MCF 10A (cell line): ENCODE measurements at regions of chr7 and their contacts with region 1.

Region 1: GRCh38 chr7:135662373-135663114 is at the start of gene STMP1:
- DNase-seq: peak; percentile 92
- H3K4me3 Mint-ChIP-seq: peak within 1 kb of the TSS; percentile 97
- H3K27ac Mint-ChIP-seq: peak within 1 kb of the TSS; percentile 98
- H3K4me1 Mint-ChIP-seq: peaks cover 26% of the 10 kb centered on the region
- H3K27me3 Mint-ChIP-seq: no peaks in the 10 kb centered on the region
- CTCF ChIP-seq: no peak
- total RNA-seq, gene STMP1: 33.6 and 37.0 TPM in 2 replicates

Region 2: DNA sequence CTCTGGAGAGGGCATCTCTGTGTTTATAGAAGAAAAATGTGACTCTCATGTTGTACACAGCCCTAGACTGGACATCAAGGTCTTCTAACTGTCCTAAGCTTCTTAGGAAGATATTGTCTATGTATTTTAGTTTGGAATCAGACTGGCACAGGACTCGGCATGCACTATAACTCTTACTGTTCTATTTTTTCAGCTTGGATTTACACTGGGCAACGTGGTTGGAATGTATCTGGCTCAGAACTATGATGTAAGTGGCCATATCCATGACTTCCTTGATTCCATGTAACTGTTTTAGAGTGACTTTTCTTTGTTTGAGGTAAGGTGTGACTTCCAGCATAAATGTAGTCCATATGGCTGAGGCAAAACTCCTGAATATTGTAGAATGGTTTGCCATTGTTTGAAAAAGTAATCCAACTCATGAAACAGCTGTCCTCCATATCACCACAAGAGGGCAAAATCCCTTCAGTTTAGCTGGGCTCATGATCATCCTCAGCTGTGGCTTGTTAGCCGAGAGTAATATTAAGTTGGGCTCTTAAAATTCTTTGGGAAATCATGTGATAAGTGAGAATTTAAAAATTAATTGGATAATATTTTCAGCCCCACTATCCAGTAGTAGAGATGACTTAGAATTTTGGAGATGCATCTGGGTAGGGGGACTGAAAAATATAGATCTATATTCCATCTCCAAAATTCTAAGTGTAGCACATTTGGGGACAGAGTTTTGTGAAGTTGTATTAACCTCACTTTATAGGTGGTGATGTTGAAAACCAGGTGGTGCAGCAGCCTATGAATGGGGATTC is 10.2 kb after region 1 on chr7:
- CTCF ChIA-PET with region 1: interaction called, 68 read pairs
- POLR2A ChIA-PET with region 1: interaction called, 42 read pairs
- intact Hi-C with region 1: no loop called
- DNase-seq: peak; percentile 77
- H3K4me3 Mint-ChIP-seq: no peak overlapping the region
- H3K27ac Mint-ChIP-seq: peak overlapping the region; percentile 46
- H3K4me1 Mint-ChIP-seq: peaks cover 37% of the 10 kb centered on the region
- H3K27me3 Mint-ChIP-seq: no peaks in the 10 kb centered on the region
- CTCF ChIP-seq: peak; percentile 67

Region 3: DNA sequence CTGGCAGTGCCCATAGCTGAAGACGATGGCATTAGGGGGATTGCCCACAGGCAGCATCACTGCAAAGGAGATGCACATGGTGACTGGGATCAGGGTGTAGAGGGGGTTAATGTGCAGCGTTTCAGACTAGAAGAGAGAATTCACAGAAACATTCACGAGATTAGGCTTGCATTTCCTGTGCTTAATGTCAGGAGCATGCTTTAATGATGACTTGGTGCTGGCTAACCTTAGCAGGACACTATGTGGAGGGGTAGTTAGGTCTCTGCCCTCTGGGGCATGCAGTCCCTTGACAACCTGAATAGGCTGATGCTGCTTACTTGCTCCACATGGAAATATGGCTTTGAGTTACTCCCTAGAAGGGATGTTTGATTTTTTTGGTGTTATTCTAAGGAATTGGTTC is 21.6 kb after region 1 on chr7:
- CTCF ChIA-PET with region 1: interaction called, 3 read pairs
- POLR2A ChIA-PET with region 1: interaction called, 14 read pairs
- intact Hi-C with region 1: no loop called
- DNase-seq: no peak
- H3K4me3 Mint-ChIP-seq: no peak overlapping the region
- H3K27ac Mint-ChIP-seq: peak overlapping the region; percentile 1
- H3K4me1 Mint-ChIP-seq: peaks cover 17% of the 10 kb centered on the region
- H3K27me3 Mint-ChIP-seq: no peaks in the 10 kb centered on the region
- CTCF ChIP-seq: no peak

Region 4: DNA sequence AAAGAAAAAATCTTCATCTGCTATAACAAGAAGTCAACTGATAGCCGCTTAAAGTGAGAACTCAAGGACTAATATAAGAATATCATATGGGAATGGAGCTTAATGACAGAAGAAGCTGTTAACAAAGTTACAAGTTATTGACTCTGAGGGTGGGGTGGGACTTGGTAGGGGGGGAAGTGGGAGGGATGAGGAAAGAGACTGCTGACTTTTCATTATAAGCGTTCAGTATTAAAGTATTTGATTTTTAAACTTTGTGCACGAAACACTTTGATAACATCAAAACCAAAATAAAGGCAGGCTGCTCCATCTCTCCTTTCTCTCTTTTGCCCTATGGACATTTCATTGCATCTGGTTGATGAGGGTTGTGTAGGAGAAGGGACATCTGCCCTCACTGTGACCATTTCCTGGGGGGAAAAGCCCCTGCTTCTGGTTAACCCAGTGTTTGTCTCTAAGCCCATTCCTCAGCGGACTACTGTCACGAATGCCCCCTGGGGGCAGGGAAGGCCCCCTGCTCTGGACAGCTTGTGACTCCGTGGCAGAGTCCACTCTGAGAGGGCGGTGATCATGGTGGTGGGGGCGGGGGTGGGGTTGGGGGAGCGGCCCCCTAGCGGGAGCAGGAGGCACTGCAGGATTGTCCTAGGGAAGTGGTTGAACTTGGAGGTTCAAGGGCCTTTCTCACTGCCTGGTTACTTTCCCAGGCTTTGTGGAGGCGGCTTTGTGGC is 48.0 kb after region 1 on chr7:
- CTCF ChIA-PET with region 1: interaction called, 12 read pairs
- POLR2A ChIA-PET with region 1: interaction called, 13 read pairs
- intact Hi-C with region 1: no loop called
- DNase-seq: peak; percentile 24
- H3K4me3 Mint-ChIP-seq: no peak overlapping the region
- H3K27ac Mint-ChIP-seq: no peak overlapping the region
- H3K4me1 Mint-ChIP-seq: peaks cover 14% of the 10 kb centered on the region
- H3K27me3 Mint-ChIP-seq: no peaks in the 10 kb centered on the region
- CTCF ChIP-seq: peak; percentile 80

Region 5: GRCh38 chr7:135914346-135914745 is 251.8 kb after region 1 on chr7:
- CTCF ChIA-PET with region 1: no interaction called
- POLR2A ChIA-PET with region 1: no interaction called
- intact Hi-C with region 1: no loop called
- DNase-seq: no peak
- H3K4me3 Mint-ChIP-seq: no peak overlapping the region
- H3K27ac Mint-ChIP-seq: no peak overlapping the region
- H3K4me1 Mint-ChIP-seq: no peaks in the 10 kb centered on the region
- H3K27me3 Mint-ChIP-seq: no peaks in the 10 kb centered on the region
- CTCF ChIP-seq: no peak